Right ventricle myocardium superior (tissue), 1 donor: ENCODE measurements at regions of chr22 and their contacts with region 1.

Region 1: DNA sequence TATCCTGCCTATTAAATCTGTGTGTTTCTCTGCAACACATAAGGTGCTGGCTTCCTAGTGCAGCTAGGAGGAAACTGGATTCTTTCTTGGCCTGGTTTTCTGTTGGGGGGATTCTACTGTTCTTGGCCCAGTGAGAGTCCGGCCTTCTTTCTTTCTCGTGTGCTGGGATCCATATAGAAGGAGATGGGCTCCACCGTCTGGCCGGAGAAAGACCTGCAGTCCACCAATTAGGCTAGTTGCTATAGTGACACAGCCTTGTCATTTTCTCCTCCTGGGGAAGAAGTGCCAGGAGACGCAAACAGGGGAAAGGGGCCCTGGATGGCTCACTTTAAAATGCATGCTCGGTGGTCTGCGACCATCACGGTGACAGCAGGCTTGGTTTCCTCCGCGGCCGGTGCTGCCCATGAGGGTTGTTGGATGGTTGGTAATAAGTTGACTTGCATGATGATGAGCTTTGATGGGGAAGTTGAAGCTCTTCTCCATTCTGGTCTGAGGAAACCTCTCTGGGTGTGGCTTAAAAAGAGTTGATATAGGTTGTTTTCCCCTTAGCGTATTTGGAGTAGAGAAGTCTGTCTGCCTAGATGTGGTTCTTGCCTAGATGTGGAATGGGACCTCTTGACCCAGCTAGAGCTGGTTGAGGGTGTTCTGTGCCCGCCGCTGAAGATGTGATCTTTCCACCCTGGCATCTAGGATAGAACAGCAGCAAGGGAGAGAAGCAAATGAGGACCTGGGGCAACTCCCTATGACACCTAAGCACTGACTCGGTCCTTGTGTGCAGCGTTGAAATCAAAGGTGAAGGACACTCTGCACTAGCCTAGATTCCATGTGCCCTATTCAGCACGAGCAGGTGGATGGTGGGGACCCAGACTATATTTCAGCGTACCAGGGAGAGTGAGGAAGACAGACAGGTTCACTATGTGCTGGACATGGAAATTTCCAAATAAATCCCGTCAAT is 1335.0 kb downstream of the BRD1 start:
- DNase-seq: peak; percentile 65
- ATAC-seq: peak; percentile 80

Region 2: GRCh38 chr22:46845296-46846149 is 1647.1 kb before region 1 on chr22:
- intact Hi-C with region 1: loop called (anchors 5 kb)
- DNase-seq: no peak
- ATAC-seq: peak; percentile 51